ENCODE measurements at regions of chr12 and their contacts with region 1.

Region 1: DNA sequence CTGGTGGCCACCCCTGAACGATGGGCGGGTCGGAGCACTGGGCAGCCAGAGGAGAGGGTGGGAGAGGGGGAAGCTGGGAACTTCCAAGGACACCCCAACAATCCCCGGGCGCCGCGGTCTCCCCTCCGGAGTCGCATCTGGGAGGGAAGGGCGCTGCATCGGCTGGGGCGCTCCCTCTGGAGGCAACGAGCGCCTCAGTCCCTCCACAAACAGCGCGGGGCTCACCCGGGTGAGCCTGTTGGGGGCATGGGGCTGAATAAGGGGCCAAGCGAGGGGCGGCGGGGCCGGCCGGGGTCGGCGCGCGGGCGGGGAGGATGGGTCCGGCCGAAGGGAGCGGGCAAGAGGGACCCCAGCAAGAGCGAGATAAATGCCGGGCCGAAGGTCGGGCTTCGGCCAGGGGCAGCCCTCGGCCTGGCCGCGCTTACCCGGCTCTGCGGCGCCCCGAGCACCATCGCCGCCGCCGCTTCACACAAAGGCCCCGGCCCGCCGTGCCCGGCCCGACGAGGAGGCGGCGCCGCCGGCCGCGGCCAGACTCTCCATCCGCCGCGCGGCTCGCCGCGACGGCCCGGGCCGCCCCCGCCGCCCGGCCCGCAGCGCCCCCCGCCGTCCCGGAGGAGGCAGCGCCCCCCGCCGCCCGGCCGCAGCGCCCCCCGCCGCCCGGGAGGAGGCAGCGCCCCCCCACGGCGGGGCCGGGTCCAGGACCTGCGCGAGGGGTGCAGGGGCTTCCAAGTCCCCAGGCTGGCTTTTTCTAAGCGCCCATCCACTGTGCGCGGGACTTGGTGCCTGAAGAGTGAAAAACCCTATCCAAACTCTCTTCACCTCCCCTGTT is at the start of gene ZBTB39:
- DNase-seq: peak; percentile 65
- H3K4me3 ChIP-seq: peak within 1 kb of the TSS; percentile 72 to 100 (median 82)
- H3K27ac ChIP-seq: peak within 1 kb of the TSS; percentile 82 to 89 (median 86)
- H3K4me1 ChIP-seq: peaks cover 14 to 41% (median 32%) of the 10 kb centered on the region in 4 donors
- H3K27me3 ChIP-seq: no peaks in the 10 kb centered on the region
- CTCF ChIP-seq: peak; percentile 31 to 51 (median 34)
- EP300 ChIP-seq: no peak
- POLR2A ChIP-seq: no peak
- total RNA-seq, gene ZBTB39: 3.4 to 8.0 (median 4.8) TPM

Region 2: GRCh38 chr12:57049890-57050289 is 43.7 kb after region 1 on chr12 and contains the start of gene MYO1A:
- in situ Hi-C with region 1: loop called in 1 of 4 experiments (anchors 10 kb)
- intact Hi-C with region 1: no loop called
- DNase-seq: peak; percentile 76
- H3K4me3 ChIP-seq: peak within 1 kb of the TSS in 3 of 4 donors; percentile 33 to 57 (median 40)
- H3K27ac ChIP-seq: peak within 1 kb of the TSS; percentile 70 to 80 (median 77)
- H3K4me1 ChIP-seq: peaks cover 7 to 30% (median 26%) of the 10 kb centered on the region in 4 donors
- H3K27me3 ChIP-seq: no peaks in the 10 kb centered on the region
- CTCF ChIP-seq: no peak
- EP300 ChIP-seq: no peak
- POLR2A ChIP-seq: peak; percentile 62
- total RNA-seq, gene MYO1A: 118 to 234 (median 184) TPM

Region 3: DNA sequence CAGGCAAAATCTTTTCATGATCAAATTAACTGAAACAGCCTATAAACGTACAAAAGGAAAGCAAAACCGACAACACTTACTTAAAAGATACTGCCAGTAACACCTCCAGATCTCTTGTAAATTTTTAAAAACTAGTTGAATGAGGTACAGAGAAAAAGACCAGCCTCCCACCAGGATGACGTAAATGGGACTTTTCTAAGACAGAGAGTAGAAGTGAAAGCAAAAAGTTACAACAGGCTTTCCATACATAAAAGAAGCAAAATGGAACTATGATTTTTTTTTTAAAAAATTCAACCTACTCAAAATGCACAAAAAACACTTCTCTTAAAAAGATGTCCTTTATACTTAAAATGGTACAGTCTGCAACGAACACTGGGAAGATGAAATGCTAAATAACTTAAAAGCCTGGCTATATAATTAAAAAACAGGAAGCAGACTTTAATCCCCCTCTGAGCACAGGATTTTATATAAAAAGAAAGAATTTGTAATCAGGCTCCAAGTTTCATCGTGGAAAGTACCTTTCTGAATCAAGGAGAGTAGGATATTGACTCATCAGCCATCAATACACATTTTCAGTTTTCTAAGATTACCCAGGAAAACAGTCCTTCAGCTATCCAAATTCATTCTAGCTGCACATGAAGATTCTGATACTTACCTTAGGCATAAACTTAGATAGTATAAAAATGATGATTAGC is 57.9 kb after region 1 on chr12:
- in situ Hi-C with region 1: loop called in 2 of 4 experiments (anchors 10 kb)
- intact Hi-C with region 1: loop called (anchors 2 kb)
- DNase-seq: no peak
- H3K4me3 ChIP-seq: no peak overlapping the region
- H3K27ac ChIP-seq: peak overlapping the region in 2 of 4 donors; percentile 14 to 53
- H3K4me1 ChIP-seq: peaks cover 0 to 4% (median 0%) of the 10 kb centered on the region in 4 donors
- H3K27me3 ChIP-seq: no peaks in the 10 kb centered on the region
- CTCF ChIP-seq: no peak
- EP300 ChIP-seq: no peak
- POLR2A ChIP-seq: no peak

Region 4: GRCh38 chr12:57069523-57069922 is 63.3 kb after region 1 on chr12:
- in situ Hi-C with region 1: loop called in 1 of 4 experiments (anchors 10 kb)
- intact Hi-C with region 1: no loop called
- DNase-seq: peak; percentile 66
- H3K4me3 ChIP-seq: no peak overlapping the region
- H3K27ac ChIP-seq: peak overlapping the region; percentile 57 to 81 (median 78)
- H3K4me1 ChIP-seq: peaks cover 0 to 14% (median 4%) of the 10 kb centered on the region in 4 donors
- H3K27me3 ChIP-seq: no peaks in the 10 kb centered on the region
- CTCF ChIP-seq: peak; percentile 82 to 95 (median 90)
- EP300 ChIP-seq: no peak
- POLR2A ChIP-seq: no peak

Region 5: DNA sequence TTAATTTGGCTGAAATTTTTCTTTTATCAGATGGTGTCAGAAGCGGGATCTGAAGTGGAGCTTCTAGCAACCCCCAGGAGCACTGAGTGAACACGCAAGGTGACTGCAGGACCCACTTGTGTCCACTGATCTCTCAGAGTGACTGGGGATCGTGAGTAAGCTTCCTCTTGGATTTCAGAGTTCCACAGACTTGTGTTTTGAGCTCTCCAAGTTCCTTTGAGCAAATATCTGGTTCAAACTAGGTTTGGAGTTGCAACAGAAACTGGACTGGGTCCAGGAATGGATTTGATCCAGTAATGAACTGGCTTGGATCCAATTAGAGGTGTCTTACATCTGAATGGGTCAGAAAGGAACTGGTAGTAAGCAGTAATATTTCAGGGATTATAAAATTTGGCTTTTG is 651.5 kb after region 1 on chr12:
- in situ Hi-C with region 1: no loop called
- intact Hi-C with region 1: no loop called
- DNase-seq: no peak
- H3K4me3 ChIP-seq: no peak overlapping the region
- H3K27ac ChIP-seq: no peak overlapping the region
- H3K4me1 ChIP-seq: no peaks in the 10 kb centered on the region
- H3K27me3 ChIP-seq: no peaks in the 10 kb centered on the region
- CTCF ChIP-seq: no peak
- EP300 ChIP-seq: no peak
- POLR2A ChIP-seq: no peak